ENCODE measurements at regions of chr9 and their contacts with region 1.

Region 1: GRCh38 chr9:74499770-74500583 is 2.8 kb downstream of the RORB start:
- DNase-seq: peak in 2 of 5 donors; percentile 20 to 55
- ATAC-seq: no peak
- H3K4me3 ChIP-seq: peak overlapping the region in 11 of 12 donors; percentile 49 to 80 (median 61)
- H3K27ac ChIP-seq: peak overlapping the region in 1 of 12 donors; percentile 64
- H3K4me1 ChIP-seq: peaks cover 0 to 28% (median 2%) of the 10 kb centered on the region in 12 donors
- H3K27me3 ChIP-seq: peaks cover 0 to 79% (median 10%) of the 10 kb centered on the region in 9 donors
- CTCF ChIP-seq: no peak
- POLR2A ChIP-seq: no peak

Region 2: GRCh38 chr9:74444369-74444768 is 55.6 kb before region 1 on chr9:
- intact Hi-C with region 1: loop called in 1 of 10 experiments (anchors 10 kb)
- DNase-seq: peak in 4 of 5 donors; percentile 17 to 40 (median 30)
- ATAC-seq: peak in 3 of 4 donors; percentile 33 to 64 (median 54)
- H3K4me3 ChIP-seq: no peak overlapping the region
- H3K27ac ChIP-seq: peak overlapping the region in 1 of 12 donors; percentile 20
- H3K4me1 ChIP-seq: peaks cover 0 to 11% (median 0%) of the 10 kb centered on the region in 12 donors
- H3K27me3 ChIP-seq: no peaks in the 10 kb centered on the region
- CTCF ChIP-seq: no peak
- POLR2A ChIP-seq: no peak

Region 3: GRCh38 chr9:74609671-74610405 is 109.9 kb after region 1 on chr9:
- intact Hi-C with region 1: no loop called
- DNase-seq: no peak
- ATAC-seq: no peak
- H3K4me3 ChIP-seq: no peak overlapping the region
- H3K27ac ChIP-seq: no peak overlapping the region
- H3K4me1 ChIP-seq: no peaks in the 10 kb centered on the region
- H3K27me3 ChIP-seq: no peaks in the 10 kb centered on the region
- CTCF ChIP-seq: no peak
- POLR2A ChIP-seq: no peak

Measured in heart left ventricle (tissue), 16 donors.